Heart left ventricle (tissue), 16 donors: ENCODE measurements at regions of chr17 and their contacts with region 1.

Region 1: DNA sequence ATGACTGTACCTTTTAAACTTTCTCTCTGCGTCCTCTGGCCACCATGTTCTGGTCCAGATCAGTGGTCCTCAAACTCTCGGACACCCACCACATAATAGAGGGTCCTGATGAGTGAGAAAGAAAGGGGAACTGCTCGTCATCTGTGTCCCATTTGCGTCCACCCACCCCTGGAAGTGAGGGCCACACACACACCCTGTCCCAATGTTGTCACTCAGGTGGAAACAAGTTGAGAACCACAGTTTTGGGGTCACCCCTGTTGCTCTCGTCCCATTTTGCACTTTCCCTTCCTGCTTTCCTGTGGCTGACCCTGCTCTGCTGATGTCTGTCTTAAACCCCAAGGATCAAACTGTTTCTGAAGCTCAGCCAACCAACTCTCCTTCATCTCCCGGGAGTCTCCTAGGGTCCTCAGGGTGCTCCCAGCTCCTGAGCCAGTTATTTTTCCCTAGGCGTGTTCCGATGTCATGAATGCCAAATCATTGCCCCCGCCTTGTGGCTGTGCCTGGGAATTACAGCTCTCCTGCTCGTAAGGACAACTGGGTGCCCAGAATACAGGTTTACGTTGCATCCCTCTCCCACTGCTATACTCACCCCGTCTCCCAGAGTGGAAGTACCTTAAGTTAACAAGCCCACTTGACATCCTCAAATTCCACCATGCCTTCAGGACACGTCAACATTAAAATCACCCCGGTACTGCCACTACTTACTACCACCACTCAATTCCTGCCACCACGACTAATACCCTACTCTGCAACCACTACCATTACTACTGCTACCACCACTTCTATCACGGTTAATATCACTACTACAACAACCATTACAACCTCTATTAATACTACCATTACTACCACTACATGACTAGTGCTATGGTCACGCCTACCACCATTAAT is 26.0 kb upstream of the HNF1B start:
- DNase-seq: peak in 4 of 5 donors; percentile 10 to 47 (median 33)
- ATAC-seq: peak in 2 of 4 donors; percentile 41 to 61
- H3K4me3 ChIP-seq: no peak overlapping the region
- H3K27ac ChIP-seq: no peak overlapping the region
- H3K4me1 ChIP-seq: no peaks in the 10 kb centered on the region
- H3K27me3 ChIP-seq: peaks cover 0 to 33% (median 0%) of the 10 kb centered on the region in 9 donors
- CTCF ChIP-seq: peak; percentile 30 to 60 (median 52)
- POLR2A ChIP-seq: no peak

Region 2: DNA sequence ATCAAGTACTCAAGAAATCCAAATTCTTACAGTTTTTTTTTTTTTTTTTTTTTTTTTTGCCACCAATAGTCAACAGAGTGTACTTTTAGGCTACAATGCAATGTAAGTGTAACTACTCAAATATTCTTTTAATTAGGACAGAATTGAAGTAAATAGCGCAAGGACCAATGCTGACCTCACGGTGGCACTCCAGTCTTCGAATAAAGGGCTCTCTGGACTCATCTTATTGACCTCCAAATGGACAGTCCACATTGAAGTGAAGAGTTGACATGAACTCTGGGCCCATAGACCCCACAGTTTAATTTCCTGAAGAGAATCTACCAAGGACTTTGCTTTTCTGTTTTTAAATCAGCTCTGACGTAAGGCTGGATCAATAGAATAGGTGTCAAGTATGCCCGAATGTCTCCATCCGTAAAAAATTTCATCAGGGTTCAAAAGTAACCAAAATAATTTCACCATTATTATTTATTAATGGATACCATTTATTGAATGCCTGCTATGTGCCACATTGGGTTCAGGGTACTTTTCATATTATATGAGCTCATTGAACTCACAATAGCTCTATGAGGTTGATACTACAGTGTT is 120.4 kb before region 1 on chr17:
- intact Hi-C with region 1: loop called in 5 of 10 experiments (anchors 2 to 10 kb)
- DNase-seq: no peak
- ATAC-seq: peak in 1 of 4 donors; percentile 66
- H3K4me3 ChIP-seq: no peak overlapping the region
- H3K27ac ChIP-seq: no peak overlapping the region
- H3K4me1 ChIP-seq: peaks cover 0 to 19% (median 0%) of the 10 kb centered on the region in 12 donors
- H3K27me3 ChIP-seq: peaks cover 0 to 36% (median 0%) of the 10 kb centered on the region in 9 donors
- CTCF ChIP-seq: peak in 9 of 12 donors; percentile 17 to 50 (median 42)
- POLR2A ChIP-seq: no peak

Region 3: GRCh38 chr17:37659925-37660324 is 111.0 kb before region 1 on chr17:
- intact Hi-C with region 1: loop called in 2 of 10 experiments (anchors 5 to 10 kb)
- DNase-seq: no peak
- ATAC-seq: no peak
- H3K4me3 ChIP-seq: no peak overlapping the region
- H3K27ac ChIP-seq: no peak overlapping the region
- H3K4me1 ChIP-seq: no peaks in the 10 kb centered on the region
- H3K27me3 ChIP-seq: peaks cover 0 to 5% (median 0%) of the 10 kb centered on the region in 9 donors
- CTCF ChIP-seq: no peak
- POLR2A ChIP-seq: no peak

Region 4: GRCh38 chr17:37701496-37701898 is 69.4 kb before region 1 on chr17:
- intact Hi-C with region 1: loop called in 4 of 10 experiments (anchors 2 to 10 kb)
- DNase-seq: peak in 1 of 5 donors; percentile 14
- ATAC-seq: peak in 3 of 4 donors; percentile 49 to 68 (median 62)
- H3K4me3 ChIP-seq: no peak overlapping the region
- H3K27ac ChIP-seq: no peak overlapping the region
- H3K4me1 ChIP-seq: no peaks in the 10 kb centered on the region
- H3K27me3 ChIP-seq: peaks cover 0 to 15% (median 0%) of the 10 kb centered on the region in 9 donors
- CTCF ChIP-seq: peak; percentile 26 to 64 (median 51)
- POLR2A ChIP-seq: no peak